Posterior cingulate gyrus (tissue), 11 donors: ENCODE measurements at regions of chr6 and their contacts with region 1.

Region 1: DNA sequence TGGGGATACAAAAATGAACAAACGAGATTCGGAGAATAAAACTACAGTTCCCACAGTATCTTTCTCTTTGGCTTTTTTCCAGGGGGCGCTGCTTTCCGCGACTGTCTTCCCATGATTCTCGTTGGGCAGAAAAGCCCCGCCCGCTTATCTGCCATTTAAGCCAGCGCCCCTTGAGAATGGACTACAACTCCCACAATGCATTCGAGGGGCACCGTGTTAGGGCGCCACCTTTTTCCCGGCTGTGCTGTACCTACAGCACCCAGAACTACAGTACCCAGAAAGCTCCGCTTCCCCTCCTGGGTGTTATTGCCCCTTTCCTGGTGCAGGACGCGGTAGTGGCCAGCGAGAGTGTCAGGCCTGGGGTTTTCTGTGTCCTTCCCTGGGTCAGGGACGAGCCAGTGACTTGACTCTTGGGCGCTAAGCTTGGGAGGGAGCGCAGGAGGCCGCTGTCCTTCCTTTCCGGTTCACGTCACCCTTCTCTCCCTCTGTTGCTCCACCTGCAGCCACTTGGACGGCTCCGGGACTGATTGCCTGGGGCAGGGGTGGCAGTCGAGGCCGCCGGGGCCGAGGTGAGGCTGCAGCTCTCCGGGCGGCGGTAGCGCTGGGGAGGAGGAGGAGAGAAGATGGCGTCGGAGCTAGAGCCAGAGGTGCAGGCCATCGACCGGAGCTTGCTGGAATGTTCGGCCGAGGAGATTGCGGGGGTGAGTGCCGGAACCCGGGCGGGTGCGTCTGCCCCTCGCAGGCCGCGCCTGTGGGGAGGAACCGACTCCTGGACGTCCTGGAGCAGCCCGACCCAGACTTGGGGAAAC is at the start of gene UBR2:
- DNase-seq: peak; percentile 91 to 99 (median 96)

Region 2: GRCh38 chr6:40727271-40727670 is 1836.6 kb before region 1 on chr6:
- intact Hi-C with region 1: no loop called
- DNase-seq: no peak

Region 3: GRCh38 chr6:42547407-42548329 is 16.2 kb before region 1 on chr6:
- intact Hi-C with region 1: loop called (anchors 1 kb)
- DNase-seq: peak; percentile 82 to 98 (median 88)